PC-3 (cell line): ENCODE measurements at regions of chr14 and their contacts with region 1.

Region 1: DNA sequence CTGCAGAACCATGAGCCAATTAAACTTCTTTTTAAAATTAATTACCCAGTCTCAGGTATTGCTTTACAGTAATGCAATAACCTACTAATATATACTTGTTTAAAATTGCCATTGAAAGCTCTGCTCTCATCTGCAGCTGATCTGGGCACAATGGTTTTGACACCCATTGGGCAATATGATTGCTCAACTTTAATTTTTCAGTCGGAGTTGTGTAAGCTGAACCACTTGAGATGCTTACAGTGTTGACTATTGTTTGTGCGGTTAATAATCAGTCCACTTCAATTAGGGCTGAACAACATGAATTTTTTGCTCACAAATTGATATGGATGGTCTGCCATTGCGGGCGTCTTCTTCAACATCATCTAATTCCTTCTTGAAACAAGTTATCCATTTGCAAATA is 18.0 kb upstream of the OR4K5 start:
- DNase-seq: no peak
- ATAC-seq: no peak
- H3K4me3 ChIP-seq: no peak overlapping the region
- H3K27ac ChIP-seq: no peak overlapping the region
- H3K4me1 ChIP-seq: no peaks in the 10 kb centered on the region
- H3K27me3 ChIP-seq: no peaks in the 10 kb centered on the region
- CTCF ChIP-seq: no peak

Region 2: GRCh38 chr14:19729763-19730162 is 172.6 kb before region 1 on chr14:
- CTCF ChIA-PET with region 1: no interaction called
- POLR2A ChIA-PET with region 1: no interaction called
- intact Hi-C with region 1: loop called (anchors 10 kb)
- DNase-seq: no peak
- ATAC-seq: no peak
- H3K4me3 ChIP-seq: no peak overlapping the region
- H3K27ac ChIP-seq: no peak overlapping the region
- H3K4me1 ChIP-seq: no peaks in the 10 kb centered on the region
- H3K27me3 ChIP-seq: no peaks in the 10 kb centered on the region
- CTCF ChIP-seq: no peak